K562 (cell line): ENCODE measurements at regions of chr2 and their contacts with region 1.

Region 1: DNA sequence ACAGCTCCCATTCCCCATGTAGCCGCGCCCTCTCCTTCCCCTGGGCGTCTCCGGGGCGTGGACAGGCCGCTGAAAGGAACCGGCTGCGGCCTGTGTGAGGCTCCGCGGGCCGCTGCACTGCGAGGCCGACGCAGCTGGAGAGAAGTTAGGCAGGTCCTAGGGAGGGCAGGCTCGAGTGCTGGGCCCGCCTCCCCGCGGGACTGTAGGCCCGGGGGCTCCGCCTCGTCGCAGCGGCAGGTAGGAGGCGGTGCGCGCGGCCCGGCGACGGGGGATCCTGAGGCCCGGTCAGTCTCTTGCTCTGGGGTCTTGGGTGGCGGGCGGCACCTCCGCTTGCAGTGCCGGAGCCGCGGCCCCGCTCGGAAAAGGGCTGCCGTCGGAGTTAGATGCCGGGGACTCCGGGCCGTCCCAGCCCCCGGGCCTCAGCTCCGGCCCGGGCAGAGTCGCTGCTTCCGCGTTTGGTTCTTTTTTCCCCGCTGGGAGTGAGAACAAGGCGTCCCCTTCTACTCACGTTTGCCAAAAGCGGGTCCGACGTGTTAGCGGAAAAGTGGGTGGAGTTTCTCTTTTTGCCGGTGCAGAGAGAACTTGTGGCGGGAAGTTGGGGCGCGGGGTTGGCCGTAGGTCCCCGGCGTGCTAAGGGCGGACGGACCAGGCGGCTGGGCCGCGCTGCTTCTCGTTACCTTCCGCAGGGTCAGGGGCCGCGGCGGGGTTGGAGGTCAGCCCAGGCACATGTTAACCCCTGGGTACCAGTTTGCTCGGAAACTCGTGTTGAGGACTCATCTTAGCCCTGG is at the start of gene VRK2:
- DNase-seq: peak; percentile 84 to 94 (median 86)
- ATAC-seq: peak; percentile 93
- H3K4me3 ChIP-seq: peak within 1 kb of the TSS; percentile 66
- H3K27ac ChIP-seq: peak within 1 kb of the TSS; percentile 93
- H3K4me1 ChIP-seq: peaks cover 14 to 19% of the 10 kb centered on the region in 2 experiments
- H3K27me3 ChIP-seq: no peaks in the 10 kb centered on the region
- CTCF ChIP-seq: peak in 2 of 3 experiments; percentile 11 to 24; a peak in 3 of 6 replicates
- EP300 ChIP-seq: no peak
- POLR2A ChIP-seq: peak; percentile 91
- RAD21 ChIP-seq: no peak
- polyA plus RNA-seq, gene VRK2: 22.6 to 30.1 TPM

Region 2: DNA sequence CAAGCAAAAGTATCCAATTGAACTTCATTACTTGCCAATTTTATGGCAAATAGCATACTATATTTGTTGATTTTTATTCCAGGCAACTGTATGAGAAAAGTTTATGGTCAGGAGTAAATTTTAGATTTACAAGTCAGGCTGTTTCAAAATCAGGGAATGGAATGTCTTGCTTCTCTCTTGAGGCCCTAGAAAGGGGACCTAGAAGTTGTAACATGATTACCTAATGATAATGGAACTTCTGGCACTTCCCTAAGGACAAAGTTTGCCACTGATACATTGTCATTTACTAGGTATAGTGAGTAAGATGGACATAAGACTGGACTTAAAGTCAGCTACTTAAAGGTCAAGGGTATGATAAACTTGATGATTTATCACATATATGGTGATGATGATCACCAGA is 103.5 kb before region 1 on chr2:
- CTCF ChIA-PET with region 1: no interaction called
- POLR2A ChIA-PET with region 1: no interaction called
- in situ Hi-C with region 1: no loop called
- intact Hi-C with region 1: no loop called
- DNase-seq: no peak
- ATAC-seq: no peak
- H3K4me3 ChIP-seq: no peak overlapping the region
- H3K27ac ChIP-seq: no peak overlapping the region
- H3K4me1 ChIP-seq: no peaks in the 10 kb centered on the region
- H3K27me3 ChIP-seq: no peaks in the 10 kb centered on the region
- CTCF ChIP-seq: no peak
- EP300 ChIP-seq: no peak
- POLR2A ChIP-seq: no peak
- RAD21 ChIP-seq: no peak

Region 3: GRCh38 chr2:57965961-57966360 is 80.8 kb before region 1 on chr2:
- CTCF ChIA-PET with region 1: no interaction called
- POLR2A ChIA-PET with region 1: no interaction called
- in situ Hi-C with region 1: no loop called
- intact Hi-C with region 1: loop called (anchors 5 kb)
- DNase-seq: no peak
- ATAC-seq: no peak
- H3K4me3 ChIP-seq: no peak overlapping the region
- H3K27ac ChIP-seq: no peak overlapping the region
- H3K4me1 ChIP-seq: no peaks in the 10 kb centered on the region; a peak in 1 of 5 replicates
- H3K27me3 ChIP-seq: no peaks in the 10 kb centered on the region
- CTCF ChIP-seq: no peak
- EP300 ChIP-seq: no peak
- POLR2A ChIP-seq: no peak
- RAD21 ChIP-seq: no peak

Region 4: DNA sequence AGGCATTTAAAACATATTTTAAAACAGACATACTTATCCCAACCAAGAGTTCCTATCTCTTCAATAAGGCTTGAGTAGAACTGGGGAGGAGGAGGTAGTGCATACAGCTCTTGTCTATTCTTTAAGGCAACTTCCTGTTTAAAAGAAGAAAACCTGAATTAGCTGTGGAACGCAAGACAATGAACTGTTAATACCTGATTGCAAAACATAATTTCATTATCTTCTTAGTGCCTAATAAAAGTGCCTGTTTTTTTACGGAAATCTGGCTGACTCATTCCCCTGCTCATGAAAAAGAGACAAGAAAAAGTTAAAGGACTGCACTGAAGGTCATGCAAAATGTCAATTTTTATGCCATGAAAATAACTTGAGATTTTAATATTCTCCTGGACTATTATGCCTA is 175.1 kb after region 1 on chr2:
- CTCF ChIA-PET with region 1: no interaction called
- POLR2A ChIA-PET with region 1: no interaction called
- in situ Hi-C with region 1: no loop called
- intact Hi-C with region 1: no loop called
- DNase-seq: no peak
- ATAC-seq: no peak
- H3K4me3 ChIP-seq: no peak overlapping the region
- H3K27ac ChIP-seq: no peak overlapping the region
- H3K4me1 ChIP-seq: no peaks in the 10 kb centered on the region
- H3K27me3 ChIP-seq: no peaks in the 10 kb centered on the region
- CTCF ChIP-seq: no peak
- EP300 ChIP-seq: no peak
- POLR2A ChIP-seq: no peak
- RAD21 ChIP-seq: no peak

Region 5: DNA sequence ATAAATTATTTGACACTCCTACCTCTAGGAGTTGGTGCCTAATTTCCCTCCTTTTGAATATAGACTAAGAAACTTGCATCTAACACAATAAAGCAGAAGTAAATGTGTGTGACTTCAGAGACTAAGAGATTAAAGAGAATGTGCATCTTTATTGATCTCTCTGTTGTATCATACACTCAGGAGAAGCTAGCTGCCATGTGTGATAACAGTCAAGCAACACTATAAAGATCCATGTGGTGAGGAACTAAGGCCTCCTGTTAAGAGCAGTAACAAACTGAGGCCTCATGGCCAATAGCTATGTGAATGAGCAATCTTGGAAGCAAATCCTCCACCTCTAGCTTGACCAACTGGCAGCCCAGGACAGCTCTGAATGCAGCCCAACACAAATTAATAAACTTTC is 191.0 kb after region 1 on chr2:
- CTCF ChIA-PET with region 1: no interaction called
- POLR2A ChIA-PET with region 1: no interaction called
- in situ Hi-C with region 1: no loop called
- intact Hi-C with region 1: loop called (anchors 2 kb)
- DNase-seq: peak in 2 of 4 experiments; percentile 35 to 77
- ATAC-seq: peak; percentile 74
- H3K4me3 ChIP-seq: peak overlapping the region; percentile 3; the same call in 1 of the 2 replicates
- H3K27ac ChIP-seq: peak overlapping the region; percentile 60
- H3K4me1 ChIP-seq: peaks cover 5 to 22% of the 10 kb centered on the region in 2 experiments
- H3K27me3 ChIP-seq: no peaks in the 10 kb centered on the region
- CTCF ChIP-seq: no peak
- EP300 ChIP-seq: no peak; the same call in 1 of the 2 replicates
- POLR2A ChIP-seq: no peak
- RAD21 ChIP-seq: no peak